Left ventricle myocardium inferior (tissue), 1 donor: ENCODE measurements at regions of chr4 and their contacts with region 1.

Region 1: GRCh38 chr4:3346146-3346545 is 53.3 kb downstream of the RGS12 start:
- DNase-seq: no peak
- H3K4me3 ChIP-seq: no peak overlapping the region
- H3K27ac ChIP-seq: no peak overlapping the region
- H3K4me1 ChIP-seq: peaks cover 21% of the 10 kb centered on the region
- H3K27me3 ChIP-seq: no peaks in the 10 kb centered on the region
- CTCF ChIP-seq: peak; percentile 93

Region 2: DNA sequence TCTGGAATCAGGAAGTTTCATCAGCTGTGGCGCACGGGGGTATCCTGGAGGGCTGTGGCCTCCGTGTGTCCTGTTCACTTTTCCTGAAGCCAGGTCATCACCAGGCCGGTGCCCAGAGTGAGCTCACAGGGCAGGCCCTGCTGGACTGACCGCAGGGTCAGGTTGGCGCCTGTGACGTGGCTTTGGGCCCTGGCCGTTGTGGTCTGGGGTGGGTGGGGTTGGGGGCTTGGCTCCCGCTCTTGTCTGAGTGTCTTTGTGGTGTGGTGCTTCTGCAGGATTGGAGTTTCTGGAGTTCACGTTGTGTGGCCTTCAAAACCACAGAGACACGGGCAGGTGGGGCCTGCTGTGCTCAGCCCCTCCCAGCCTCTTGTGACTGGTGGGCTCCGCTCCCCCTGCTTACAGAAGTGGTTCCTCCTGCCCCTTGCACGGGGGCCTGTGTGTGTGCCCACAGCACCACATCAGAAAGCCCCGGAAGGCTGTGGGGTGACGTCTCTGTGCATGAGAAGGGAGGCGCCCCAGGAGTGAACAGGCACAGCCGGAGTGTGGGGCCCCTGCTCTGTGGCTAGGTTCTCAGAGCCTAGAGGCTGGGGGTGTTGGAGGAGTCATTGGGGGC is 43.9 kb before region 1 on chr4:
- intact Hi-C with region 1: no loop called
- DNase-seq: no peak
- H3K4me3 ChIP-seq: no peak overlapping the region
- H3K27ac ChIP-seq: no peak overlapping the region
- H3K4me1 ChIP-seq: peaks cover 75% of the 10 kb centered on the region
- H3K27me3 ChIP-seq: no peaks in the 10 kb centered on the region
- CTCF ChIP-seq: no peak

Region 3: DNA sequence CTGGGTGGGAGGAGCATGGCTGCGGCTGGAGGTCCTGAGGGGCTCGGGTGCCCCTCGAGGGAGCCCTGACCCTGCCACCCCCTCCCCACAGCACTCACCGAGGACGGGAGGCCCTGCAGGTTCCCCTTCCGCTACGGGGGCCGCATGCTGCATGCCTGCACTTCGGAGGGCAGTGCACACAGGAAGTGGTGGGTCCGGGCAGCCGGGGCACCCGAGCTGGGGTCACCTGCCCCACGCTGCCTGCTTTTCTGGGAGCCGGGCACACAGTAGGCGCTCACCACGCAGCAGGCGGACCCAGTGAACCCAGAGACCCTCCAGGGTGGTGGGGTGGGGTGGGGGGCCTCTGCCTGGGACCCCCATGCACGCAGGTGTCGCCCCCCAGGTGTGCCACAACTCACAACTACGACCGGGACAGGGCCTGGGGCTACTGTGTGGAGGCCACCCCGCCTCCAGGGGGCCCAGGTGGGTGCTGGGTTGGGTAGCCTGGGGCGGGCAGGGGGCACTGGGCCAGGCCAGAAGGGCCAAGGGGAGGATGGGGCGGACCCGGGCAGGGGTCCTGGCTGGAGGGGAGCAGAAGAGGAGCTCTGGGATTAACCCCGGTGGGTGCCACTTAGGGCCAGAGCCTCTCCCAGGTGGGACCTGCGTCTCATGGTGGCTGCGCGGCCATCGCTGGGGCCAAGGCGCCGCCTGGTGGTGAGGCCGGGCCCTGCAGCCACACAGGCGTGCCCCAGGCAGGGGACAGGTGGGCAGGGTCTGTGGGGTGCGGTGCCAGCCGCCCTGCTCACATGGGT is 97.0 kb after region 1 on chr4:
- intact Hi-C with region 1: loop called (anchors 2 kb)
- DNase-seq: no peak
- H3K4me3 ChIP-seq: no peak overlapping the region
- H3K27ac ChIP-seq: no peak overlapping the region
- H3K4me1 ChIP-seq: peaks cover 6% of the 10 kb centered on the region
- H3K27me3 ChIP-seq: peaks cover 7% of the 10 kb centered on the region
- CTCF ChIP-seq: peak; percentile 99